ENCODE measurements at regions of chr20 and their contacts with region 1.

Region 1: DNA sequence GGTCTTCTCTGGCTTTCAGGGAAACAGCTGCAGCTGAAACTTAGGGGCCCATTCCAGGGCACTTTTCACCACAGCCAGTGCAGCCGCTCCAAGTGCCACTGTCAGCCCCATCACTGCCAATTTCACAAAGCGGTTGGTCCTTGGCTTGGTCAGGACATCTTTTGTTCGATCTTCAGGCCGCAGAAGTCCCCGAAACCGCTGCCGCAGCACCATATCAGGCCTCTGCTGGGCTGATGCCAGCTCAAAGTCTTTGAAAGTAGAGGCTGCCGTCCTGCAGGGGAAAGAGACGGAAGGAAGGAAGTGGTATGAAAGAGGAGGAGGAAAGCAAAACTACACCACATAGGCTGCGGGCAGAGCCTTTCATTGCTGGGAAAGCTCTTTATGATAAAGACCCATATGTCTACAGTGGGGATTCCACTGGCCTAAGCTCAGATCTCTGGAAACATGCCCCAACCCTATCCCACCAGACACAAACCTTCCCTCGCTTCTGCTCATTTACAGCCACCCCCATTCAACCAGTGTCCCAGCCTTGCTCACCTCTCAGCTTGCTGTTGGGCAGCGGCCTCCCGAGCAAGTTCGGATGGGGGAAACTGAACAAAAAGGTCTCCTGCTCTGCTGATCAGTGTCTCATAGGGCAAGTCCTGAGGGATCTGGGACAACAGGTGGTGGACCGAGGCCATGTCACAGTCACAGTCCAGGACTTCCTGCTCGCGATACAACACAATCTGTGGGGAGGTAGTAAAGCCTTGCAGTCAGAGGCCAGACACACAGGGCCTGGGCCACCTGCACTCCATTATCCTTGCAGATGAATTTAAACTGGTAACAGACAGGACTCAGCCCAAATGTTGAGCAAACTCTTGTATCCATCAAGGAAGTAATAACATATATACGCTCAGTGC is 23.5 kb downstream of the TBC1D20 start:
- DNase-seq: peak; percentile 81
- ATAC-seq: peak; percentile 76
- H3K4me3 Mint-ChIP-seq: peak overlapping the region; percentile 56
- H3K27ac Mint-ChIP-seq: peak overlapping the region; percentile 80
- H3K4me1 Mint-ChIP-seq: peaks cover 59% of the 10 kb centered on the region
- H3K27me3 Mint-ChIP-seq: no peaks in the 10 kb centered on the region

Region 2: GRCh38 chr20:412081-412480 is 26.7 kb before region 1 on chr20:
- CTCF ChIA-PET with region 1: interaction called, 10 read pairs
- DNase-seq: no peak
- ATAC-seq: no peak
- H3K4me3 Mint-ChIP-seq: no peak overlapping the region
- H3K27ac Mint-ChIP-seq: no peak overlapping the region
- H3K4me1 Mint-ChIP-seq: peaks cover 57% of the 10 kb centered on the region
- H3K27me3 Mint-ChIP-seq: no peaks in the 10 kb centered on the region

Region 3: DNA sequence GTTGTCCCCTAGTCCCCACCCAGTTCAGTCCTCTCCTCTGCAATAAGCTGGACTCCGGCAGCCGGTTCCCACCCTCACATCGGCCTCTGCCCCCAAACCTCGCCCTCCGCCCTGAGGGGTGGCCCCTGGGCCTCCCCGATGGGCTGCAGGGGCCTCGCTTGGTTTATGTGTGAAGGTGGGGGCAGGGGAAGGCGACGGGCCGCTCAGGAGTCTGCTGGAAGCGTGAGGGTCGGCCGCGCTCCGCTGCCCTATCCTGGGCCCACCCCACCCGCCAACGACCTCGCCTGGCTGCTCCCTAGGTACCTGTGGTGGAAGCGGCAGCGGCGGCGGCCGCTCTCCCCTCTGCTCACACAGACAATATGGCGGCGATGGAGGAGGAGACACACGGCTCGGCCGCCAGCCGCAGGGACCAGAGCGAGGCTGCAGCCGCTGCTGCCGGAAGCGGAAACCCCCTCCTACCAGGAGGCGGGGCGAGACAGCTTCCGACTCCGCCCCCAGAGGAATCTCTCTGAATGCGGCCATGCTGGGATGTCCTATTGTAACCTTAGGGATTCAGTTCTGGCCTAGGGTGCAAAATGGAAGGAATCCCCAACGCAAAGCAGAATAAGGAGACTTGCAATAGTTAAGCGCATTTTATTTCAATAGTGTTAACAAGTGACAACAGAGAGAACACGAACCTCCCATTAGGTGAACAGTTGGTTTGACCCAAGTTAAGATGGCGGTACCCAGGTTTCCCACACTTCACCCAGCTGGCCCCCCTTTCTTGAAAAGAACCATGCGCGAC is 104.7 kb after region 1 on chr20 and contains the start of gene CSNK2A1:
- CTCF ChIA-PET with region 1: no interaction called
- DNase-seq: peak; percentile 97
- ATAC-seq: peak; percentile 99
- H3K4me3 Mint-ChIP-seq: peak within 1 kb of the TSS; percentile 84
- H3K27ac Mint-ChIP-seq: peak within 1 kb of the TSS; percentile 94
- H3K4me1 Mint-ChIP-seq: peaks cover 42% of the 10 kb centered on the region
- H3K27me3 Mint-ChIP-seq: peaks cover 4% of the 10 kb centered on the region
- total RNA-seq, gene CSNK2A1: 111 to 124 TPM

Measured in activated CD8-positive, alpha-beta memory T cell treated with anti-CD3 and anti-CD28 coated beads, Interleukin-2, amount 10 ng/mL, durations not matched to agents 7 days and 5 days (primary cell).